Activated CD4-positive, alpha-beta T cell treated with anti-CD3 and anti-CD28 coated beads, Interleukin-2, amount 10 ng/mL, durations not matched to agents 24 days and 14 days (primary cell): ENCODE measurements at regions of chr2 and their contacts with region 1.

Region 1: DNA sequence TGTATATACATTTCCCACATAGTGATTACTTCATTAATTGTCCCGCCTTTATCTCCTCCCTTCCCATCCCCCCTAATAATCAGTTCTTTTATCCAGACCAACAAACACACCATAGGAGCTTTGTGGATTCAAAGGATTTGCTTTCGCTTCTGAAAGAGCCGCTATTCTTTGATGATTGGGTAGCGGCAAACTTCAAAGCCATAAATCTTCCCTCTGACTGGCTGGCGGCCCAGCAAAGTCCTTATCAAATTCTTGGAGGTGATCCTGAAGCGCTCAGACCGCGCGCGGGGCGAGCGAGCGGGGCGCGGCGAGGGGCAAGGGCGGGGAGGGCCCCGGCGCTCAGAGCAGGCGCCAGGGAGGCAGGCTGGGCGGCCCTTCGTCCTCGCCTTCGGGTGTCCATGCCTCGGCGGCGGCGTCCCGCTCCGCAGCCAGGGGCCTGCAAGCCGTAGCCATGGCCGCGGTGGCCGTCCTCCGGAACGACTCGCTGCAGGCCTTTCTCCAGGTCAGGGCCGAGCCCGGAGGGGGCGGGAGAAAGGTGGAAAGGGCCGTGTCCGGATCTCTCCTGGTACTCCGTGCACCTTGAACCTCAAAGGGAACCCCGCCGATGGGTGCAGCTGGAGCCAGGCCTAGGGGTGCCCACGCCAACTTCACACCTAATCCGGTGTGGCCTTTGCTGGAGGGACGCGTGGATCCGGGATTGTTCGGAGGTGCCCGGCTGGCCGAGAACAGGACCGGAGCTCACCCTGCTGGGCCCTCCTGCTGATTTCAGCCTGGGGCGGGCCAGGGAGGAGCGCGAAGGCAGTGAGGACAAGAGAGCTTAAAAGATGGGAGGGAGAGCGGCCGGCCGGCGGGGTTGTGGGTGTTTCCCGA is at the start of gene SP5:
- DNase-seq: peak; percentile 83
- H3K4me3 Mint-ChIP-seq: peak within 1 kb of the TSS; percentile 86
- H3K27ac Mint-ChIP-seq: peak within 1 kb of the TSS; percentile 75
- H3K4me1 Mint-ChIP-seq: peaks cover 20% of the 10 kb centered on the region
- H3K27me3 Mint-ChIP-seq: peaks cover 71% of the 10 kb centered on the region
- total RNA-seq, gene SP5: 0.09 TPM in 1 of 2 replicates, not detected in the other

Region 2: GRCh38 chr2:170235860-170236679 is 479.2 kb before region 1 on chr2:
- intact Hi-C with region 1: loop called (anchors 10 kb)
- DNase-seq: peak; percentile 76
- H3K4me3 Mint-ChIP-seq: no peak overlapping the region
- H3K27ac Mint-ChIP-seq: no peak overlapping the region
- H3K4me1 Mint-ChIP-seq: no peaks in the 10 kb centered on the region
- H3K27me3 Mint-ChIP-seq: peaks cover 28% of the 10 kb centered on the region

Region 3: DNA sequence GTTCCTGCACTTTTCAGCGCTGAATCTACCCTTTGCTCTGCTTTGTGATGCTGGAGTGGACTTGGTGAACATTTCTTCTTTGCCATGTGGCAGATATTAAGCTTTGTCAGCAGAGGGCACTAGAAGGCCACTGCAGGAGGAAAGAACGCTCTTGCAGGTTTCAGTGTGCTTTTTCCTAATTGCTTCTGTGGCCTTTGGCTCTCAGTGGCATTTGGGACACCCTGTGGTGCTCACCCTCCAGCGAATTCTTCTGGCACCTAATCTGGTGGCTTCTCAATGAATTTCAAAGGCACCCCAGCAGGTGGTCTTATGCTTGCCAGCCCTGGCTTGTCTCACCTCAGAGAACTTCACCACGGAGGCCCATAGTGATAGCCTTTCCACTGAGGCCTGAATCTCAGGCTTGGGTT is 390.7 kb before region 1 on chr2:
- intact Hi-C with region 1: loop called (anchors 10 kb)
- DNase-seq: peak; percentile 85
- H3K4me3 Mint-ChIP-seq: no peak overlapping the region
- H3K27ac Mint-ChIP-seq: no peak overlapping the region
- H3K4me1 Mint-ChIP-seq: no peaks in the 10 kb centered on the region
- H3K27me3 Mint-ChIP-seq: peaks cover 6% of the 10 kb centered on the region

Region 4: DNA sequence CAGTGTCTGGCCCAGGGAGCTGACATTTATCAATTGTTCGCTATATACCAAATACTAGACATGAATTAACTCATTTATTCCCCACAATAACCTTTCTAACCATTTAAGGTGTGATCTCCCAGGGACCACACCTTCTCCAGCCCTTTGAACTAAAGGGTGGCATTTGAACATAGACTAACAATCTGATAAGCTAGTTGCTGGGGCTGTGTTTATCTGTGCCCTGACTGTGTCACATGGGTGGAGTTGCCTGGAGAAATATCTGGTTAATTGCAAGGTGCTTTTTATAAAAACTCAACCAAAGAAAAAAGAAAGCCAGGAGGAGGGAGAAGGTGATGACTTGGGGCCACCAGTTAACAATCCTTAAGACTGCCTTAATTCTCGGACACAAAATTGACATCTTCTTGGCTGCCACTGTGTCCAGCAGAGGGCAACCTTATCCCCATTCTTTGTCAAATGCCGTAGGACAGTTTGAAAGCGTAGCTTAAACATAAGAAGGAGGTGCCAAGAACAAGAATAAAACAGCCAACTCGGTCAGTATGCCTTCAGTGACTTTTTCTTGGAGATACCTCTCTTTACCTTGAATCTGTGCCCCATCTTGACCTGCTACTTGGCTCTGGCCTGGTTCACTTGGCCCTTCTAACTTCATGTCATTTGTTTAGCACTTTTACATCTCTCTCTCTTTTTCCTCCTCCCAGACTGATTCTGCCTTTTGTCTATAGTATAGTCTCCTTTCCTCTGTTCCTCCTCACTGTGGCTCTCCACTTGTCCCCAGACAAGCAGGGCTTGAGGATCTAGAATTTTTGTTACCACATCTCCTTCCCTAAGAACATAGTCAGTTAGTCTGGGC is 354.0 kb before region 1 on chr2:
- intact Hi-C with region 1: loop called (anchors 5 kb)
- DNase-seq: peak; percentile 87
- H3K4me3 Mint-ChIP-seq: peak overlapping the region; percentile 40
- H3K27ac Mint-ChIP-seq: peak overlapping the region; percentile 97
- H3K4me1 Mint-ChIP-seq: peaks cover 38% of the 10 kb centered on the region
- H3K27me3 Mint-ChIP-seq: peaks cover 4% of the 10 kb centered on the region

Region 5: GRCh38 chr2:170647741-170648436 is 67.4 kb before region 1 on chr2:
- intact Hi-C with region 1: no loop called
- DNase-seq: peak; percentile 57
- H3K4me3 Mint-ChIP-seq: no peak overlapping the region
- H3K27ac Mint-ChIP-seq: no peak overlapping the region
- H3K4me1 Mint-ChIP-seq: peaks cover 12% of the 10 kb centered on the region
- H3K27me3 Mint-ChIP-seq: peaks cover 12% of the 10 kb centered on the region

Region 6: GRCh38 chr2:170770606-170771420 is 55.5 kb after region 1 on chr2:
- intact Hi-C with region 1: loop called (anchors 2 kb)
- DNase-seq: peak; percentile 89
- H3K4me3 Mint-ChIP-seq: peak overlapping the region; percentile 85
- H3K27ac Mint-ChIP-seq: peak overlapping the region; percentile 82
- H3K4me1 Mint-ChIP-seq: peaks cover 5% of the 10 kb centered on the region
- H3K27me3 Mint-ChIP-seq: peaks cover 31% of the 10 kb centered on the region

Region 7: DNA sequence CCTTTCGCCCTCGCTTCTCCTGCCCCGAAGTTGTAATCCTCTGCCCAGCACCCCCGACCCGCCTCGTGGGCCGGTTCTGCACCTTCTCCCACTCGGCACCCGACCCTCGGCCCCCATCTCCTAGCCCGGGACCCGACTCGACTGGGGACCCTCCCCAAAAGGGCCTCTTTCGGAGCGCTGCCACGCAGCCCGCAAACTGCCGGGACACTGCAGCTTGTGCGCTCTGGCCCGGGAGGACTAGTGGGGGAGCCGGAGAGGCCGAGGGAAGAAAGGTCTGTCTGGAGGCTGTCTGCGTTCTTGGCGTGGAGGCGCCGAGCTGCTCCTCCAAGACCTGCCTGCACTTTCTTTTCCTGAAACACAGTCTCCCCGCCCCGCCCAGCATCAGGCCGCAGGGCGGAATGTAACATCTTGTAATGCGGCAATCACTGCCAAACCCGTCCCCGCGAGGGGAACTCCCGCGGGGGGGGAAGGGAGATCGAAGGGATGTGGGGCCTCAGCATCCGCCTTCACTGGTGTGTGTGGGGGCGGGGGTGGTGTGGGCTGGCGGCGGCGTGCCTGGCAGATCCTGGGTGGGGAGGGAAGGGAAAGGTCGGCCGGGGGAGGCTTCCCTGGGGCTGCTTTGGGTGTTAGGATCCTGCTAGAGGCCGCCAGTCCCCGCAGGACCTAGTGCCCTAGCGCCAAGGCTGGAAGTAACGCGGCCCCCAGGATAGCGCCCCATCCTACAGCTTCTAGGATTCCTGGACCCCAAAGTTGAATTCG is 1380.0 kb after region 1 on chr2:
- intact Hi-C with region 1: loop called (anchors 5 kb)
- DNase-seq: peak; percentile 89
- H3K4me3 Mint-ChIP-seq: peak overlapping the region; percentile 82
- H3K27ac Mint-ChIP-seq: peak overlapping the region; percentile 37
- H3K4me1 Mint-ChIP-seq: peaks cover 28% of the 10 kb centered on the region
- H3K27me3 Mint-ChIP-seq: peaks cover 76% of the 10 kb centered on the region